CD14-positive monocyte (primary cell): ENCODE measurements at regions of chr6 and their contacts with region 1.

Region 1: DNA sequence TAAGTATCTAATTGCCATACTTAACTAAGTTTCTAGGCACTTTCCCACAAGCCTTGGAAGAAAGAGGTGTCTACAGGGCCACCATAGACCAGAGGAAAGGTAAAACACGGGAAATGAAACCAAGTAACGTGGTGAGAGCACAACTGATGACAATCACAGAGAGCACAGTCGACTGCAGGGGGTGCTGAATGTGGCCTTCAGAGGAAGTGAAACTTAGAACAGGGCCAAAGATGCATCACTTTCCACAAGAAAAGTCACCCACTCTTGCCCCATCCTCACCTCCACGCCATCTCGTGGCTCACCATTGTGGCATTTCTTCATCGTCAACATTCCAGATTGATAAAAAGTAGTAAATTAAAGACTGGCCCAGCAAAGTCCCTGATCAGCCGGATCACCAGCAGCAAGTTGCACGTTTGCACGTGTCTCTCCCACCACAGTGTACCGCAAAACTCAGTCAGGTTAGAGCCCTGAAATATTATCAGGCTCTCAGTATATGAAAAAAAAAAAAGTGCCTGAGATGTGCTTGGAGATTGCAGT is 31.4 kb downstream of the HIVEP2 start:
- DNase-seq: peak; percentile 91 to 99 (median 92)
- H3K4me3 ChIP-seq: peak overlapping the region; percentile 32 to 87 (median 74)
- H3K4me3 Mint-ChIP-seq: peak overlapping the region; percentile 82 to 93
- H3K27ac ChIP-seq: peak overlapping the region; percentile 65 to 97
- H3K27ac Mint-ChIP-seq: peak overlapping the region; percentile 97 to 100 (median 99)
- H3K4me1 ChIP-seq: peaks cover 22 to 27% of the 10 kb centered on the region in 2 donors
- H3K4me1 Mint-ChIP-seq: peaks cover 30% of the 10 kb centered on the region
- H3K27me3 ChIP-seq: no peaks in the 10 kb centered on the region
- H3K27me3 Mint-ChIP-seq: peaks cover 0 to 1% (median 0%) of the 10 kb centered on the region in 3 donors
- CTCF ChIP-seq: peak; percentile 46

Region 2: DNA sequence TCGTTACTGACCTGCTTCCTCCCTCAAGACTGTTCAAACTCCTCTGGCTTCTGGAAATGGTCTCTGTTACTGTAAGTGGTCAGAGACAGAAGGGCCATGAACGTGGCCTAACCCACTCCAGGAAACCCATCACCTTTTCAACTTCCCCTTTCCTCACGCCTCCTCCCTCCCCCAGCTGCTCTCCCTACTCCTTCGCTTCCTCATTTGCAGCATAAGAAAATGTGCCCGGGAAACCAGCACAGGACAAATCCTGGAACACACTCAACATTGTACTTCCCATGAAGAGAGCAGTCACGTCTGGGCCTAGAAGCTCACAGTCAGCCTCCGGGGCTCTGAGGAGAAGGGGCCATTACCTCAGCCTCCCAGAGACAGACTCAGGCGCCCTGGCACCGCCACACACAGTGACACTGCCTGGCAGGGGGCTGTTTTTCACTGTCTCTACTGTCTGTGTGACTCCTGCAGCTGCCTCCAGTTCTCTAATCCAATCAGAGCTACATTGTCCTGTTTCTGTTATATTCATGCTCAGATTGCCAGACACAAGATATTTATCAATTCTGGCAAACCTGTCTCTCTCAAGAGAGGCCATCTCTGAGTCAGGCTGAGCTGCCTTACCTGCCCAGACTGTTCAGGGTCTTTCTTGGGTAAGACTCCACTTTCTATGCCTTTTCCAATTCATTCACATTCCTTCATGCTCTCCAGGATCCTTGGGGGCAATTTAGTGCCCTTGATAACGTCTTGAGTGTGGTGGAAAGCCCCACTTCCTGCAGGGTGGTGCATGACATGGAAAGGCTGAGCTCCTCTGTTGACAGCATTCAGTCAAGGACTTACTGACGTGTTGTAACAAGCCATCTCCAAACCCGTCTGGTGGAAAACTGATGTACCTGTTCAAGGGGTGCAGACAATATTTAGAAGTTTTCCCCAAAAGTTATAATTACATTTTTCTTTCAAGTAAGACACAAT is 210.8 kb before region 1 on chr6:
- intact Hi-C with region 1: loop called in 1 of 2 experiments (anchors 10 kb)
- DNase-seq: peak; percentile 83 to 94 (median 89)
- H3K4me3 ChIP-seq: peak overlapping the region in 1 of 3 experiments; percentile 47
- H3K4me3 Mint-ChIP-seq: peak overlapping the region; percentile 34 to 82
- H3K27ac ChIP-seq: peak overlapping the region; percentile 56 to 57
- H3K27ac Mint-ChIP-seq: peak overlapping the region; percentile 87 to 95 (median 90)
- H3K4me1 ChIP-seq: peaks cover 85 to 94% of the 10 kb centered on the region in 2 donors
- H3K4me1 Mint-ChIP-seq: peaks cover 85% of the 10 kb centered on the region
- H3K27me3 ChIP-seq: no peaks in the 10 kb centered on the region
- H3K27me3 Mint-ChIP-seq: peaks cover 0 to 9% (median 3%) of the 10 kb centered on the region in 3 donors
- CTCF ChIP-seq: no peak

Region 3: GRCh38 chr6:142784344-142784743 is 129.2 kb before region 1 on chr6:
- intact Hi-C with region 1: loop called in 1 of 2 experiments (anchors 10 kb)
- DNase-seq: peak; percentile 21 to 59 (median 36)
- H3K4me3 ChIP-seq: no peak overlapping the region
- H3K4me3 Mint-ChIP-seq: no peak overlapping the region
- H3K27ac ChIP-seq: no peak overlapping the region
- H3K27ac Mint-ChIP-seq: peak overlapping the region in 1 of 7 donors; percentile 63
- H3K4me1 ChIP-seq: no peaks in the 10 kb centered on the region
- H3K4me1 Mint-ChIP-seq: peaks cover 4% of the 10 kb centered on the region
- H3K27me3 ChIP-seq: no peaks in the 10 kb centered on the region
- H3K27me3 Mint-ChIP-seq: no peaks in the 10 kb centered on the region
- CTCF ChIP-seq: no peak

Region 4: GRCh38 chr6:142975365-142975764 is 61.8 kb after region 1 on chr6:
- intact Hi-C with region 1: no loop called
- DNase-seq: peak; percentile 45 to 70 (median 57)
- H3K4me3 ChIP-seq: no peak overlapping the region
- H3K4me3 Mint-ChIP-seq: no peak overlapping the region
- H3K27ac ChIP-seq: peak overlapping the region in 1 of 2 donors; percentile 41
- H3K27ac Mint-ChIP-seq: peak overlapping the region in 3 of 7 donors; percentile 10 to 64 (median 16)
- H3K4me1 ChIP-seq: peaks cover 6 to 10% of the 10 kb centered on the region in 2 donors
- H3K4me1 Mint-ChIP-seq: peaks cover 10% of the 10 kb centered on the region
- H3K27me3 ChIP-seq: no peaks in the 10 kb centered on the region
- H3K27me3 Mint-ChIP-seq: peaks cover 0 to 3% (median 0%) of the 10 kb centered on the region in 3 donors
- CTCF ChIP-seq: no peak